ENCODE measurements at regions of chr1 and their contacts with region 1.

Region 1: GRCh38 chr1:157838966-157839365 is 2.6 kb downstream of the CD5L start:
- DNase-seq: no peak
- H3K4me3 ChIP-seq: no peak overlapping the region
- H3K27ac ChIP-seq: no peak overlapping the region
- H3K4me1 ChIP-seq: no peaks in the 10 kb centered on the region
- H3K27me3 ChIP-seq: no peaks in the 10 kb centered on the region
- CTCF ChIP-seq: no peak

Region 2: DNA sequence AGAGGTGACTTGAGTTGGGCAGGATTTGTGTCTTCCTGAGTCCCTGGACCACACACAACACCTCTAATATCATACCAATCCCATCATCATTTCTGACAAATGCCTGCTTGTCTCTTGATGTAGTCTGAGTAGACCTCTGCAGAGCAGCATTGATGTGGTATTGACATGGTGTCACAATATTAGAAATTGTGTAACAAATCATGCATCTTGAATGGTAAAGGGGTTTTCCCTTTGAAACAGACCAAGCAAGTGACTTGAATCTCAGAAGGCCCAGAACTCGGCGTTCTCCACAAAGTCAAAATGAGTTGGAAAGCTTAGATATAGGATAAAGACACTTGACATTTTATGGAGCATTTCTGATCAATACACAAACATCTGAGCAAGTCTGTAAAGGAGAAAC is 81.8 kb after region 1 on chr1:
- CTCF ChIA-PET with region 1: no interaction called
- dilution Hi-C with region 1: loop called (anchors 5 kb)
- in situ Hi-C with region 1: no loop called
- intact Hi-C with region 1: no loop called
- DNase-seq: no peak
- H3K4me3 ChIP-seq: no peak overlapping the region
- H3K27ac ChIP-seq: no peak overlapping the region
- H3K4me1 ChIP-seq: no peaks in the 10 kb centered on the region
- H3K27me3 ChIP-seq: peaks cover 8% of the 10 kb centered on the region
- CTCF ChIP-seq: no peak

Measured in mammary epithelial cell (primary cell).